Activated CD8-positive, alpha-beta memory T cell treated with anti-CD3 and anti-CD28 coated beads, Interleukin-2, amount 10 ng/mL, durations not matched to agents 7 days and 5 days (primary cell): ENCODE measurements at regions of chr10 and their contacts with region 1.

Region 1: DNA sequence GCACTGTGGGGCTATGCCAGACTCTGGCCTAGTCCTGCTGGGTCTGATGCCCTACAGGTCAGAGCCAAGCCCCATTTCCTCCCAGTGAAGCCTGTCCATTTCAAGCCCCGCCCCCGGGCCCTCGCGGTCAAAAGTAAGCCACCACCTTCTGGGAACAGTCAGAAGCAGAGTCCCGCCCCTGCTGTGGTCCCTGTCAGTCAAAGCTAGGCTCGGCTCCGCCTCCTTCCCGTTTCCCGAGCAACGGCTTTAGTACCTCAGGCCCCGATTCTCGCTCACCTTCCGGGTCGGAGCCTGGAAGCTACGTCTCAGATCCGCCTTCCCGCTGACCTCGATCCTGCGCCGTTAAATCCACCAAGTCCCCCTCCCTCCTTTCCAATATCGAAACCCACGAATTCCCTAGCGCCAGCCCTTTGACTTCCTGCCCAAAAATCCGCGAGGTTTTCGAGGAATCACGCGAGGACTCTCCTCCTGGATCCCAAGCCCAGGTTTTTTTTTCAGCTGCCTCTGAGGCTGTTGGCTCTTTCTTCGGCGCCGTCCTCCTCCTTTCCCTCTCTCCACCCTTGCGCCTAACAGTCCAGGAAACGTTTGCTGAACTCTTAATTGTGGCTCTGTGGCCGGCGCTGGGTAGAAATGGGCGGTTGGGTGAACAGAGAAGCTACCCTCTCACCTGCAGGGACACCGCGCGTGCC is 11.8 kb downstream of the SFXN3 start:
- DNase-seq: peak; percentile 96
- ATAC-seq: peak; percentile 95
- H3K4me3 Mint-ChIP-seq: peak overlapping the region; percentile 95
- H3K27ac Mint-ChIP-seq: peak overlapping the region; percentile 91
- H3K4me1 Mint-ChIP-seq: peaks cover 23% of the 10 kb centered on the region
- H3K27me3 Mint-ChIP-seq: peaks cover 31% of the 10 kb centered on the region

Region 2: DNA sequence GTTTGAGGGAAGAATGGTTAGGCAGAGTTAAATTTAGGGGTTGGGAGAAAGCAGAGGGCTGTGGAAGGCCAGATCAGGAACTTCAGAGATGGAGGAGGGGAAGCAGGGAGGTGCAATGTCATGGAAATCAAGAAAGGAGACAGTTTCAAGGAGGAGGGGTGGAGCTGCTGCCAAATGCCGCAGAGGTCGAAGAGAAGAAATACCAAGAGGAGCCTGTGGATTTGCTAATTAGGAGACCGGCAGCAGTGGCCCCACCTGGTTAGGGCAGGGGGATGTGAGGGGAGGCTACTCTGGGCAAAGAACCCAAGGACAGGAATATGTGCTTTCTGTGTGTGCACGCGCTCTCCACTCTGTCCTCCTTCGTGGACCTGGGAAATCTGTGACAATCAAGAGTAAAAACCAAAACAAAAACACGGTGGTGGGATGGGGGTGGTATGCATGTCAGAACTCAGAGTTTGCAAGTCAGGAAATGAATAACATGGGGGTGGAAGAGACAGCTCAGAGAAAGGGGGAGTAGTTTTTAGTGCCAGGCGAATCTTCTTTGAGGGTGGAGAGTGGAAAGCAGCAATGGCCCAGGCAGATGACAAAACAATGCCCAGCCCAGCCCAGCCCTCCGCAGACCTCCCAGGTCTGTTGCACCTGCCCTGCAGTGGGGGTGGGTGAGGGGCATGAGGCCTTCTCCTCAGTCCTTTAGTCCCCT is 400.4 kb before region 1 on chr10:
- CTCF ChIA-PET with region 1: no interaction called
- DNase-seq: no peak
- ATAC-seq: no peak
- H3K4me3 Mint-ChIP-seq: no peak overlapping the region
- H3K27ac Mint-ChIP-seq: no peak overlapping the region
- H3K4me1 Mint-ChIP-seq: peaks cover 3% of the 10 kb centered on the region
- H3K27me3 Mint-ChIP-seq: peaks cover 62% of the 10 kb centered on the region

Region 3: GRCh38 chr10:101031128-101031795 is 11.5 kb before region 1 on chr10 and contains the starts of genes PDZD7 and SFXN3:
- CTCF ChIA-PET with region 1: interaction called, 59 read pairs
- DNase-seq: peak; percentile 97
- ATAC-seq: peak; percentile 89
- H3K4me3 Mint-ChIP-seq: peak within 1 kb of the TSS; percentile 85
- H3K27ac Mint-ChIP-seq: peak within 1 kb of the TSS; percentile 91
- H3K4me1 Mint-ChIP-seq: peaks cover 15% of the 10 kb centered on the region
- H3K27me3 Mint-ChIP-seq: peaks cover 18% of the 10 kb centered on the region
- total RNA-seq, gene PDZD7: 0.59 to 1.2 TPM
- total RNA-seq, gene SFXN3: 38.2 to 48.8 TPM

Region 4: DNA sequence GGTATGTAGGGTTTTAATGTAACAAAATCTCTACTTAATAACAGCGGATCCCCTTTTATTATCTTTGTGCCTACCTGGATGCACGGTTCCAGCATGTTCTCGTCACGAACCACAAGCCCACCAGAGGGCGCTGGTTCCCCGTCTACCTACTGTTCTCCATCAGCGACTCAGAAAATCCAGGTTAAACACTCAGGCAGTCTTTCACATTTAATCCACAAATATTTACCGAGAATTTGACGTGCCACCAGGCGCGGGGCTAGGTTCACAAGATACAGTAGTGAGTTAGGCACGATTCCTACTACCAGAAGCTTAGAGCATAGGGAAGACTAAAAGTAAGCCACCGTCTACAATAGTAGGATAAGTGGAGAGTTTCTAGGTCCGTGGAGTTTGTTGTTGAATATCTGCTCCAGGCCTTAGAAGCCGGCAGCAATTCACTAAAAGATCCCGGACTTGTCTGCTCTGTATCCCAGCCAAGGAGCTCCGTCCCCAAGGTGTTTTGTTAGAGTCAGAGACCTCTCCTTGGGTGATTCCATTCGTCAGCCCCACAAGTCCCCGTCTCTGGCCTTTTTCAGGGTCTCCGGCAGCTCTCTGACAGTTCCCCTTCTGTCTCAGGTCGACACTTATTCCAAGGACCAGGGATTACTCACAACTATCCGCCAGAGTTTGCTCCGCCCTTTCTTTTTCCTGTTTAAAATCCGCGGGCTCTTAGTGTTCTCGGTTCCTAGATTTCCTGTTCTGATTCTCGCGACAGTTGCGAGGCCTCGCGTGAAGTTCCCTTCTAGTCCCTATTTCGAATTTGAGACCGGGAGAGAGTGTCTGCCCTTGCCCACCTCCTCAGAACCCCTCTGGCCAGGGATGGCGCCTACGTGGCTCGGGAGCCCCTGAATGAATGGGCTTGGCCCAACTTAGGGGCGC is 17.5 kb after region 1 on chr10:
- CTCF ChIA-PET with region 1: interaction called, 402 read pairs
- DNase-seq: peak; percentile 93
- ATAC-seq: peak; percentile 71
- H3K4me3 Mint-ChIP-seq: peak overlapping the region; percentile 86
- H3K27ac Mint-ChIP-seq: peak overlapping the region; percentile 90
- H3K4me1 Mint-ChIP-seq: peaks cover 43% of the 10 kb centered on the region
- H3K27me3 Mint-ChIP-seq: peaks cover 31% of the 10 kb centered on the region

Region 5: GRCh38 chr10:101120884-101121653 is 78.3 kb after region 1 on chr10:
- CTCF ChIA-PET with region 1: interaction called, 10 read pairs
- DNase-seq: peak; percentile 57
- ATAC-seq: peak; percentile 88
- H3K4me3 Mint-ChIP-seq: peak overlapping the region; percentile 77
- H3K27ac Mint-ChIP-seq: peak overlapping the region; percentile 70
- H3K4me1 Mint-ChIP-seq: peaks cover 23% of the 10 kb centered on the region
- H3K27me3 Mint-ChIP-seq: peaks cover 78% of the 10 kb centered on the region